ENCODE measurements at regions of chr17 and their contacts with region 1.

Region 1: GRCh38 chr17:77011173-77012011 is 129.4 kb upstream of the SEC14L1 start:
- DNase-seq: peak; percentile 4
- ATAC-seq: no peak
- H3K4me3 ChIP-seq: no peak overlapping the region
- H3K27ac ChIP-seq: no peak overlapping the region
- H3K4me1 ChIP-seq: no peaks in the 10 kb centered on the region
- H3K27me3 ChIP-seq: no peaks in the 10 kb centered on the region
- CTCF ChIP-seq: no peak; the same call in 1 of the 2 replicates

Region 2: GRCh38 chr17:77054936-77055335 is 43.5 kb after region 1 on chr17:
- CTCF ChIA-PET with region 1: interaction called, 6 read pairs
- POLR2A ChIA-PET with region 1: no interaction called
- in situ Hi-C with region 1: no loop called
- intact Hi-C with region 1: loop called (anchors 5 kb)
- DNase-seq: no peak
- ATAC-seq: peak; percentile 41
- H3K4me3 ChIP-seq: no peak overlapping the region
- H3K27ac ChIP-seq: no peak overlapping the region
- H3K4me1 ChIP-seq: no peaks in the 10 kb centered on the region
- H3K27me3 ChIP-seq: no peaks in the 10 kb centered on the region
- CTCF ChIP-seq: no peak